ENCODE measurements at regions of chr19 and their contacts with region 1.

Region 1: GRCh38 chr19:3108775-3109174 is 14.6 kb downstream of the GNA11 start:
- DNase-seq: peak; percentile 62
- H3K4me3 ChIP-seq: no peak overlapping the region
- H3K27ac ChIP-seq: no peak overlapping the region
- H3K4me1 ChIP-seq: no peaks in the 10 kb centered on the region
- H3K27me3 ChIP-seq: no peaks in the 10 kb centered on the region
- CTCF ChIP-seq: peak; percentile 85 to 93
- POLR2A ChIP-seq: no peak

Region 2: GRCh38 chr19:2820112-2820702 is 288.6 kb before region 1 on chr19:
- CTCF ChIA-PET with region 1: no interaction called
- POLR2A ChIA-PET with region 1: interaction called, 10 read pairs
- dilution Hi-C with region 1: no loop called
- intact Hi-C with region 1: no loop called
- DNase-seq: peak; percentile 8
- H3K4me3 ChIP-seq: peak overlapping the region; percentile 52 to 86 (median 54)
- H3K27ac ChIP-seq: no peak overlapping the region
- H3K4me1 ChIP-seq: peaks cover 3% of the 10 kb centered on the region
- H3K27me3 ChIP-seq: no peaks in the 10 kb centered on the region
- CTCF ChIP-seq: no peak
- POLR2A ChIP-seq: no peak

Region 3: DNA sequence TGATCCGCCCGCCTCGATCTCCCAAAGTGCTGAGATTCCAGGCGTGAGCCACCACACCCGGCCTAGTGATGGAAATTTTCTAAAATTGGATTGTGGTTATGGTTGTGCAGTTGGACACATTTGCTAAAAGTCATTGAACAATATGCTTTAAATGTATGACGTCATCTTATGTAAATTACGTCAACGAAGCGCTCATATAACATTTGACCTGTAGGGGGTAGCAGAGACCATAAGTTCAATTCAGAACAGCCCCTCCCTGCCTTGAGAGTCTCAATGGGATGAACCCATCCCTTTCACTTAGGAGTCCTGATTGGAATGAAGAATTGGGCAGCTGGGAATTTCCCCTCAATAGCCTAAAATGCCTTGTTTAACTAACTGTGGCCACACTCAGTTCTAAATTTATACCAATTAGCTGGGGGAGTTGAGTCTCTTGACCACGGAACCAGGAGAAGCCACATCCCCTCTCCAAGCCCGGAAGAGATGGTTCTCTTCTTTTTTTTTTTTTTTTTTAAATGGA is 146.7 kb before region 1 on chr19:
- CTCF ChIA-PET with region 1: interaction called, 200 read pairs
- POLR2A ChIA-PET with region 1: no interaction called
- dilution Hi-C with region 1: no loop called
- intact Hi-C with region 1: loop called (anchors 1 kb)
- DNase-seq: peak; percentile 89
- H3K4me3 ChIP-seq: no peak overlapping the region
- H3K27ac ChIP-seq: no peak overlapping the region
- H3K4me1 ChIP-seq: no peaks in the 10 kb centered on the region
- H3K27me3 ChIP-seq: no peaks in the 10 kb centered on the region
- CTCF ChIP-seq: peak; percentile 51 to 52
- POLR2A ChIP-seq: no peak

Region 4: DNA sequence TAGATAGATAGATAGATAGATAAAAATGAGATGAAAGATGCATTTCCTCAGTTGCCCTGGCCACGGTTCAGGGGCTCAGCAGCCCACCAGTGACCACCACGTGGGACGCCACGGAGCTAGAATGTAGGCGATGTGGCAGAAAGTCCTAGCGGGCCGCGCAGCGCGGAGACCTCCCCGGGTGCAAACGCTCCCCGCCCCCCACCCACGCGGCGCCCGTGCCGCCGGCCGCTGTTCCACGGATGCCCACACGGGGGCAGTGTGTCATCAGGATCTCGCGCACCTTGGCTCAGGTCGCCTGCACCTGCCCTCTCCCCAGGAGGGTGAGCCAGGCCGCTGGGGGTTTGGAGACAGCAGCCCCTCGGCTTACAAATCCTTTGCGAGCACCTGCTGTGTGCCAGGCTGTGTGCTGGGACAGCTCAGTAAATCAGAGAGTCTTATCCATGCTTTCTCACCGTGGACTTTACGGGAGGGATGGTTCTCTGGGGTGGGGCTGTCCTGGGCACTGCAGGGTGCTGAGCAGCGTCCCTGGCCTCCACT is 32.8 kb before region 1 on chr19:
- CTCF ChIA-PET with region 1: interaction called, 75 read pairs
- POLR2A ChIA-PET with region 1: interaction called, 3 read pairs
- dilution Hi-C with region 1: no loop called
- intact Hi-C with region 1: loop called (anchors 1 kb)
- DNase-seq: peak; percentile 49
- H3K4me3 ChIP-seq: no peak overlapping the region
- H3K27ac ChIP-seq: no peak overlapping the region
- H3K4me1 ChIP-seq: no peaks in the 10 kb centered on the region
- H3K27me3 ChIP-seq: no peaks in the 10 kb centered on the region
- CTCF ChIP-seq: peak; percentile 92 to 97
- POLR2A ChIP-seq: no peak

Region 5: GRCh38 chr19:3094601-3095437 is 14.0 kb before region 1 on chr19:
- CTCF ChIA-PET with region 1: interaction called, 32 read pairs
- POLR2A ChIA-PET with region 1: interaction called, 3 read pairs
- dilution Hi-C with region 1: no loop called
- intact Hi-C with region 1: loop called (anchors 1 kb)
- DNase-seq: no peak
- H3K4me3 ChIP-seq: peak overlapping the region; percentile 64 to 99 (median 76)
- H3K27ac ChIP-seq: peak overlapping the region; percentile 51
- H3K4me1 ChIP-seq: peaks cover 36% of the 10 kb centered on the region
- H3K27me3 ChIP-seq: no peaks in the 10 kb centered on the region
- CTCF ChIP-seq: no peak
- POLR2A ChIP-seq: no peak

Measured in endothelial cell of umbilical vein (primary cell).